ENCODE measurements at regions of chr1 and their contacts with region 1.

Region 1: DNA sequence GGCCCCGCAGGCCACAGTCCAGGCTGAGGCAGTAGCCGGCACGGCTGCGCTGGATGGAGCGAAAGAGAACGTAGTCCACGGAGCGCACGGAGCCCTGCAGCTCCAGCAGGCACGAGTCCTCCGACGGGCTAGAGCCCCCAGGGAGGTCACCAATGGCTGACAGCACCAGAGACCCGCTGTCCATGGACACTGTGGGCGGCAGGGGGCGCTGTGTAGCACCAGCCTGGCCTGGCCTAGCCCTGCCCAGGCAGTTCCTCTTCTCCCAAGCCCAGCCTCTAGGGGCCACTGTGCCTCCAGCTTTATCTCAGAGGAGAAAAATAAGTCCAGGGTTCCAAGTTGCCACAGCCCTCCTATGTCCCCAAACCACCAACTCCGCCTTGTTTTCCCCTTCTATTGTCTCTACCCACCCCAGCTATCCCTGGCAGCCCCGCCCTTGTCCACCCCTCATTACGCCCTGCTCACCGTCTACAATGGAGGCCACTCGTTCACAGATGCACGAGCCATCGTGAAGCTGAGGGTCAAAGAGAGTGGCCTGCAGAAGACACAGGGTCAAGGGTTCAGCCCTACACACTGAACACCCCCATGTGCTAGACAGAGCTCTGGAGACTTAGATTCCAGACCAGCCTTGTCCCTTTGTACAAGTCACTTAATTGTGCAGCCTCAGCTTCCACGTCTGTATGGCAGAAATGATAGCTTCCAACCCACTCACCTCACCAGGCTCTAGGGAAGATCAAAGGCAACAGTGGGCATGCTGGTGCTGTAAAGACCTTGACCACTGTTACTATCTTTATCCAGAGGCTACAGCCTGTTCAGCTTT is 4.4 kb downstream of the ENTREP3 start:
- DNase-seq: peak; percentile 95
- H3K4me3 ChIP-seq: peak overlapping the region in 2 of 4 donors; percentile 22 to 37
- H3K27ac ChIP-seq: peak overlapping the region; percentile 34 to 54 (median 52)
- H3K4me1 ChIP-seq: peaks cover 21 to 30% (median 24%) of the 10 kb centered on the region in 4 donors
- H3K27me3 ChIP-seq: no peaks in the 10 kb centered on the region
- CTCF ChIP-seq: peak; percentile 99 to 100 (median 99)
- EP300 ChIP-seq: no peak
- POLR2A ChIP-seq: no peak

Region 2: GRCh38 chr1:155135415-155136028 is 115.3 kb before region 1 on chr1 and contains the start of gene SLC50A1:
- in situ Hi-C with region 1: no loop called
- intact Hi-C with region 1: no loop called
- DNase-seq: peak; percentile 96
- H3K4me3 ChIP-seq: peak within 1 kb of the TSS; percentile 50 to 67 (median 63)
- H3K27ac ChIP-seq: peak within 1 kb of the TSS; percentile 96 to 100 (median 100)
- H3K4me1 ChIP-seq: peaks cover 12 to 83% (median 56%) of the 10 kb centered on the region in 4 donors
- H3K27me3 ChIP-seq: no peaks in the 10 kb centered on the region
- CTCF ChIP-seq: peak; percentile 35 to 84 (median 47)
- EP300 ChIP-seq: no peak
- POLR2A ChIP-seq: peak; percentile 97
- total RNA-seq, gene SLC50A1: 5.2 to 199 (median 44.4) TPM

Region 3: GRCh38 chr1:155236441-155236840 is 14.4 kb before region 1 on chr1:
- in situ Hi-C with region 1: no loop called
- intact Hi-C with region 1: no loop called
- DNase-seq: no peak
- H3K4me3 ChIP-seq: no peak overlapping the region
- H3K27ac ChIP-seq: no peak overlapping the region
- H3K4me1 ChIP-seq: peaks cover 8 to 20% (median 10%) of the 10 kb centered on the region in 4 donors
- H3K27me3 ChIP-seq: no peaks in the 10 kb centered on the region
- CTCF ChIP-seq: no peak
- EP300 ChIP-seq: no peak
- POLR2A ChIP-seq: no peak

Region 4: DNA sequence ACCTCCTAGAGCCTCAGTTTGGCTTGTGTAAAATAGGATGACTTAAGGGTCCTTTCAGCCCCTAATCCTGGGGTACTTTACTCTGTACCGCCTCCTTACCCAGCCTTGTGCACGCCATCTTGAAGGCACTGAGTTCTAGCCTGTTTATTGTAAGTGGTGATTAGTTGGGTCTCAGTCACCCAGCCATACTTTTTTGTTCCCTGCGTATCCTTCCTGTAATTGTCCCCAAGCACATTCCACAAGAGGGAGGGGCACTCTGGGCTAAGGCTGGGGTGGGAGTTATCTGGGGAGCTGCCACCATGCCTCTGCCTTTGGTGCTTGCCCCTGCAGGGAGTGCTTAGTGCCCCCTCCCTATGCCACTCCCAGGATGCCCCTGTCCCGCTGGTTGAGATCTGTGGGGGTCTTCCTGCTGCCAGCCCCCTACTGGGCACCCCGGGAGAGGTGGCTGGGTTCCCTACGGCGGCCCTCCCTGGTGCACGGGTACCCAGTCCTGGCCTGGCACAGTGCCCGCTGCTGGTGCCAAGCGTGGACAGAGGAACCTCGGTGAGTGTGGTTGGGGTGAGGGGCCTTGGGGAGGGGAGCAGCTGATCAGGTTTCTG is 58.7 kb after region 1 on chr1:
- in situ Hi-C with region 1: loop called in 2 of 4 experiments (anchors 10 kb)
- intact Hi-C with region 1: no loop called
- DNase-seq: peak; percentile 49
- H3K4me3 ChIP-seq: peak overlapping the region; percentile 64 to 94 (median 80)
- H3K27ac ChIP-seq: peak overlapping the region; percentile 91 to 94 (median 94)
- H3K4me1 ChIP-seq: peaks cover 10 to 33% (median 20%) of the 10 kb centered on the region in 4 donors
- H3K27me3 ChIP-seq: no peaks in the 10 kb centered on the region
- CTCF ChIP-seq: no peak
- EP300 ChIP-seq: no peak
- POLR2A ChIP-seq: no peak

Region 5: DNA sequence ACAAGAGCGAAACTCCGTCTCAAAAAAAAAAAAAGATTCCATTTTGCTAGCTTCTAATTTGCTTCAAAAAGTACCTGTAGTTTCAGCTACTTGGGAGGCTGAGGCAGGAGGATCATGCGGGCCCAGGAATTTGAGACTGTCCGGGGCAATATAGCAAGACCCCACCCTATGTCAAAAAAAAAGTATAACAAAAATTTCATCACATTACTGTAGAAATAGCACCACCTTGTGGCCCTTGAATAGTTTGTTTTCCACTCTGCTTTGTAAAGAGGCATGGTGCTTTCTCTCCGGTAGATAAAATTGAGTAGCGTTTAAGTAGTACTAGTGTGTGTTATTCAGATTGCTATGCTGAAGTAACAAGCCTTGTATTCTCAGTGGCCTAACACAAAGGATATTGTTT is 340.9 kb after region 1 on chr1:
- in situ Hi-C with region 1: loop called in 1 of 4 experiments (anchors 25 kb)
- intact Hi-C with region 1: loop called (anchors 10 kb)
- DNase-seq: no peak
- H3K4me3 ChIP-seq: no peak overlapping the region
- H3K27ac ChIP-seq: no peak overlapping the region
- H3K4me1 ChIP-seq: no peaks in the 10 kb centered on the region
- H3K27me3 ChIP-seq: no peaks in the 10 kb centered on the region
- CTCF ChIP-seq: peak; percentile 49 to 56 (median 51)
- EP300 ChIP-seq: no peak
- POLR2A ChIP-seq: no peak

Region 6: DNA sequence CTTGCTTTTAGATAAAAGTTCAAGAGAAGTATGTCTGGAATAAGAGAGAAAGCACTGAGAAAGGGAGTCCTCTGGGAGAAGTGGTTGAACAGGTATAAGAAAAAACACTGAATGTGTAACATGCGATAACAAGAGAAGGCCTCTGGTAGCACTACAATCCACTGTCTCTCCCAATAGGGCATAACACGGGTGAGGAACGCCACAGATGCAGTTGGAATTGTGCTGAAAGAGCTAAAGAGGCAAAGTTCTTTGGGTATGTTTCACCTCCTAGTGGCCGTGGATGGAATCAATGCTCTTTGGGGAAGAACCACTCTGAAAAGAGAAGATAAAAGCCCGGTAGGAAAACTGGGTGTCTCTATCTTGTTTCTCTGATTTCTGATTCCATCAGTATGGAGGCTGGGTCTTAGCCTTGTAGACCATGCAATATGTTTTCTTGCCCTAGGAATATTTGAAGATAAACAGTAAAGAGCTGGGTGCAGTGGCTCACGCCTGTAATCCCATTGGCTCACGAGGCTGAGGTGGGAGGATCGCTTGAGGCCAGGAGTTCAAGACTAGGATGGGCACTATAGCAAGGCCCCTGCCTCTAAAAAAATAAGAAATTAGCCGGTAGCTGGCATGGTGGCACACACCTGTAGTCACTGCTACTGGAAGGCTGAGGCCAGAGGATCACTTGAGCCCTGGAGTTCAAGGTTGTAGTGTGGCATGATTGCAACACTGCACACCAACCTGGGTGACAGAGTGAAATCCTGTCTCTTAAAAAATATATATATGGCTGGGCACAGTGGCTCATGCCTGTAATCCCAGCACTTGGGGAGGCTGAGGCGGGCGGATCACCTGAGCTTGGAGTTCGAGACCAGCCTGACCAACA is 478.4 kb after region 1 on chr1:
- in situ Hi-C with region 1: no loop called
- intact Hi-C with region 1: no loop called
- DNase-seq: peak; percentile 46
- H3K4me3 ChIP-seq: no peak overlapping the region
- H3K27ac ChIP-seq: no peak overlapping the region
- H3K4me1 ChIP-seq: no peaks in the 10 kb centered on the region
- H3K27me3 ChIP-seq: no peaks in the 10 kb centered on the region
- CTCF ChIP-seq: peak; percentile 52 to 69 (median 62)
- EP300 ChIP-seq: no peak
- POLR2A ChIP-seq: no peak